ENCODE measurements at regions of chr4 and their contacts with region 1.

Region 1: GRCh38 chr4:4260253-4260652 is 12.2 kb upstream of the TMEM128 start:
- DNase-seq: no peak
- ATAC-seq: peak; percentile 97
- H3K4me3 Mint-ChIP-seq: no peak overlapping the region
- H3K27ac Mint-ChIP-seq: no peak overlapping the region
- H3K4me1 Mint-ChIP-seq: no peaks in the 10 kb centered on the region
- H3K27me3 Mint-ChIP-seq: no peaks in the 10 kb centered on the region

Region 2: DNA sequence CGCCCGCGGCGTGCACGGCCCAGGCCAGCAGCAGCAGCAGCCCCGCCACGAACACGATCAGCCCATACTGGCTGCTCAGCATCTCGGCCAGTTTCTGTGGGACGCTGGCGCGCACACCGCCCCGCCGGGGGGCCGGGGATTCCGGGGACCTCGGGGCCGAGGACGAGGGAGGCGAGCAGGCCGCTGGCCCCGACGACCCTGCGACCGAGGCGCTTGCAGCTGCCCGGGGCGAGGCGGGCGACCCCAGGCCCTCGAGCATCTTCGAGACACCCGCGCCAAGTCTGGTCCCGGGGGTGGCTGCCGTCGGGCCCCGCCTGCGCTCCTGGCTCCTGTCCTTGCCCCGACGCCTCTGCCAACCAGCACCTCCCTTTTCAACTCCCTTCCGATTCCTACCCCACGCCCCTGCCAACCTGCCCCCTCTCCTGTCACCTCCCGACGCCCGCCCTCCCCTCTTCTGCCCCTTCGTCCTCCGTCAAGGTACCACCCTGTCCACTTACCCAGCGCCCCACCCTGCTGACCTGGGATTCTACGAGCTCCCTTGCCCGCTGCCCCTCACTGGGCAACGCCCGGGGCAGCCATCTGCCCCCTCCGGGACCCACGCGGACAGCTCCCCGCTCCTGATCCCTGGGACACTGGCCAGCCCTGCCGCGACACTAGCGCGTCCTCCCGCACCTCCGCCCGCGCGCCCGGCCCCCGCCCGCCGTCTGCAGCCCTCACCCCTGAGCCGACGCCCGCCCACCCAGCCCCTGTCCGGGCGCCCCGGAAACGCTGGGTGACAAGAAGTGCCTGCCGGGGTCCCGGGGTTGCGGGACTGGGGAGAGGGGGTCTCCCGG is 33.4 kb before region 1 on chr4 and contains the start of gene OTOP1:
- CTCF ChIA-PET with region 1: no interaction called
- POLR2A ChIA-PET with region 1: no interaction called
- intact Hi-C with region 1: no loop called
- DNase-seq: no peak
- ATAC-seq: no peak
- H3K4me3 Mint-ChIP-seq: no peak within 1 kb of the TSS
- H3K27ac Mint-ChIP-seq: no peak within 1 kb of the TSS
- H3K4me1 Mint-ChIP-seq: peaks cover 10% of the 10 kb centered on the region
- H3K27me3 Mint-ChIP-seq: peaks cover 54% of the 10 kb centered on the region
- total RNA-seq, gene OTOP1: not detected

Region 3: DNA sequence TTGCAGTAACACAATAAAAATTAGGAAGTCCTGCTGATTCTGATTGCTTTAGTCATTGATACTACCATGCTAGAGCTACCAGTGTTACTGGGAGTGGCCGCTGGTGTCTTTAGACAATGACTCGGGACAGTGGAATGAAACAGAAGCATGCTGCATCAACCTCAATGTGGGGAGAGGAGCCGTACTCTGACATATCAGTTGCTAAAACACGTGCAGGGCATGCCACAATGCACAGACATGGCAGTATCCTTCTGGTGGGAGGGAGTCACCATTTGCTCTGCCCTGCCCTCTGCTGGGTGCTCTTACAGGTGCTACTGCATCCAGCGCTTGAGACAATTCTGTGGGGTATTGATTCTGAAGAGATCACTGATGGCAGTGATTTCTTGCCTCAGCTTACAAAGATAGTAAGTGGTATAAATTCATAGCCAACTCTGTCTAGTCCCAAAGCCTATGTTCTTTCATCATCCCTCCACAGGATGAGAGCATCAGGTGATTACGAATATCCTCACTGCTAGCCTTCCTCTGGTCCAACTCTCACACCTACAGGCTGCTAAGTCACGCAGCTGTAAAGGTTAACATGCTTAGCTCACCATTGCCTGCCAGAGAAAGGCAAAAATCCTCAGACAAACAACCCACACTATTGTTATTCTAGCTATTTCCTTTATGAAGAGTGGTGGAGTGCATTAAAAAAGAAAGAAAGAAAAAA is 170.4 kb after region 1 on chr4:
- CTCF ChIA-PET with region 1: interaction called, 6 read pairs
- POLR2A ChIA-PET with region 1: no interaction called
- intact Hi-C with region 1: loop called in 1 of 2 experiments (anchors 10 kb)
- DNase-seq: peak; percentile 80
- ATAC-seq: peak; percentile 96
- H3K4me3 Mint-ChIP-seq: no peak overlapping the region
- H3K27ac Mint-ChIP-seq: no peak overlapping the region
- H3K4me1 Mint-ChIP-seq: peaks cover 5% of the 10 kb centered on the region
- H3K27me3 Mint-ChIP-seq: no peaks in the 10 kb centered on the region

Measured in activated CD4-positive, alpha-beta T cell treated with anti-CD3 and anti-CD28 coated beads for 36 hours (primary cell).